ENCODE measurements at regions of chr14 and their contacts with region 1.

Region 1: GRCh38 chr14:54773171-54773975 is 129.3 kb downstream of the GCH1 start:
- DNase-seq: peak; percentile 80 to 91 (median 88)
- ATAC-seq: peak; percentile 91
- H3K4me3 ChIP-seq: no peak overlapping the region
- H3K27ac ChIP-seq: peak overlapping the region; percentile 74 to 77
- H3K4me1 ChIP-seq: peaks cover 0 to 35% of the 10 kb centered on the region in 2 donors
- H3K27me3 ChIP-seq: no peaks in the 10 kb centered on the region
- CTCF ChIP-seq: peak; percentile 34 to 50

Region 2: DNA sequence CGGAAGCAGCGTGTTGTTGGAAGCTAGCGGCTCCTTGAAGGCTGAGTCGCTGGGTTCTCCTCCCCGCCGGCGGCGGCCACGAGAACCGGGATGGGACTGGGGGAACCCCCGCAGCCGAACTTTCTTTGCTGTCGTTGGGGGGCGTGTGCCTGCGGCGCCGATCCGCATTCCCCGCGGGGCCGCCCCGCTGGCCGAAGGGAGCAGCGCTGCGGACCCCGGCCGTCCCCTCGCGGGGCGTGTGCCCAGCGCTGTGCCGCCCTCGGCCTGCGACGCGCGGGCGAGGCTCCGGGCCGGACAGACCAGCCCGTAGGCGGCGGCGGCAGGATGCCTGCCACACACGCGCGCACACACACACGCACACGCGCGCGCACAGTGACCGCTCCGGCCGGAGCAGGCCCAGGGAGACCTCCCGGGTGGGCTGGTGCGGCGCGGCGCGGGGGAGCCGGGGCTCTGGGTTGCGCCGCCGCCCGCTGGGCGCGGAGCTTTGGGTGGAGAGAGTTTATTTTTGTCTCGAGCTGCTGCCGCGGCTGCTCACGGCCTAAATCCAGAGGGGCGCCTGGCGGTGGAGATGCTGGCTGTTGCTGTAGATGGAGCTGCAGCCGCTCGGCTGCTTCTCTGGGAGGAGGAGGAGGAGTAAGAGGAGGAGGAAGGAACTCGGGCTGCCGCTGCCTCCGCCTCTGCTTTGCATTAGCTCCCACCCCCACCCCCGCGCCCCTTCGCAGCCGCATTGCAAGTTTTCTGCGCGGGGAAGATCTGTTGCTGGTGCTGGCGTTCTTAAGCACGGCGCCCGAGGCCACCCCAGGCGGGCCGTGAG is 206.8 kb before region 1 on chr14 and contains the start of gene SAMD4A:
- intact Hi-C with region 1: loop called in 1 of 2 experiments (anchors 5 kb)
- DNase-seq: peak; percentile 76 to 90 (median 86)
- ATAC-seq: peak; percentile 48
- H3K4me3 ChIP-seq: peak within 1 kb of the TSS; percentile 67 to 86
- H3K27ac ChIP-seq: peak within 1 kb of the TSS; percentile 86 to 98
- H3K4me1 ChIP-seq: peaks cover 19 to 60% of the 10 kb centered on the region in 2 donors
- H3K27me3 ChIP-seq: peaks cover 0 to 63% of the 10 kb centered on the region in 2 donors
- CTCF ChIP-seq: peak in 1 of 2 donors; percentile 30
- polyA plus RNA-seq, gene SAMD4A: 4.5 to 10.1 (median 7.6) TPM

Region 3: GRCh38 chr14:54829455-54830224 is 56.3 kb after region 1 on chr14:
- intact Hi-C with region 1: no loop called
- DNase-seq: no peak
- ATAC-seq: no peak
- H3K4me3 ChIP-seq: no peak overlapping the region
- H3K27ac ChIP-seq: no peak overlapping the region
- H3K4me1 ChIP-seq: no peaks in the 10 kb centered on the region
- H3K27me3 ChIP-seq: no peaks in the 10 kb centered on the region
- CTCF ChIP-seq: no peak

Region 4: GRCh38 chr14:55681088-55681487 is 907.7 kb after region 1 on chr14:
- intact Hi-C with region 1: no loop called
- DNase-seq: no peak
- ATAC-seq: no peak
- H3K4me3 ChIP-seq: no peak overlapping the region
- H3K27ac ChIP-seq: no peak overlapping the region
- H3K4me1 ChIP-seq: no peaks in the 10 kb centered on the region
- H3K27me3 ChIP-seq: no peaks in the 10 kb centered on the region
- CTCF ChIP-seq: no peak

Measured in left lung (tissue), 14 donors.